ENCODE measurements at regions of chr15 and their contacts with region 1.

Region 1: DNA sequence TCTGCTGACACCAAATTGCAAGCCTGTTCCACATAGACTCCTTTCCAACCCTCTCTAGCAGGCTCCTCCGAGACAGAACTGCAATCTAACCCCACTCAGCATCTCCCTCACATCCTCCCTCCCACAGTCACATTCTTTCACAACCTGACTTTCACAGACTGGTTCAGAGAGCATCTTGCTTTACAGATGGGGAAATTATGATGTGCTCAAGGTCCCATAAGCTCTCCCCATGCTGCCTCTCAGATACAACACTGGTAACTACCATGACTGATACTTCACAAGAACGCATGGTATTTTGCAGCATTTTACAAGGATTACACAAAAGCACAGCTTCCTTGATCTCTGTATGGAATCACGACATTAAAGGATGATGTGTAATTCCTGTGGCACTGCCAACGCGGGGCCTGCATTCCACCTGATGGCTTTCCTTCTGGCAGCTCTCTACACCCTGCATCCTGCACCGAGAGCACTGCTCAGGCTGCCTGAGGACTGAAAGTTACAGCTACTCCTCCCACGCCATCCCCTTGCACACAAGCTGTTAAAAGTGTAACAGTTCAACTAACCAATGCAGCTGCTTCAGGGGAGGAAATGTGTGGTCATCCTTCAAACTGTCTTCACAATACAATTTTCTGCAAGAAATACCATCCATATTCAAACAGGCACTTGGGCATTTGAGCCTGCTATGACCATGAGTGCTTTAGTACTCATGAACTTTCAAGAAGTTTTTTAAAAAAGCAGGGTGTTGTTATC is 27.6 kb downstream of the TBC1D2B start:
- DNase-seq: peak; percentile 73
- H3K4me3 Mint-ChIP-seq: peak overlapping the region; percentile 51
- H3K27ac Mint-ChIP-seq: peak overlapping the region; percentile 87
- H3K4me1 Mint-ChIP-seq: peaks cover 97% of the 10 kb centered on the region
- H3K27me3 Mint-ChIP-seq: no peaks in the 10 kb centered on the region

Region 2: DNA sequence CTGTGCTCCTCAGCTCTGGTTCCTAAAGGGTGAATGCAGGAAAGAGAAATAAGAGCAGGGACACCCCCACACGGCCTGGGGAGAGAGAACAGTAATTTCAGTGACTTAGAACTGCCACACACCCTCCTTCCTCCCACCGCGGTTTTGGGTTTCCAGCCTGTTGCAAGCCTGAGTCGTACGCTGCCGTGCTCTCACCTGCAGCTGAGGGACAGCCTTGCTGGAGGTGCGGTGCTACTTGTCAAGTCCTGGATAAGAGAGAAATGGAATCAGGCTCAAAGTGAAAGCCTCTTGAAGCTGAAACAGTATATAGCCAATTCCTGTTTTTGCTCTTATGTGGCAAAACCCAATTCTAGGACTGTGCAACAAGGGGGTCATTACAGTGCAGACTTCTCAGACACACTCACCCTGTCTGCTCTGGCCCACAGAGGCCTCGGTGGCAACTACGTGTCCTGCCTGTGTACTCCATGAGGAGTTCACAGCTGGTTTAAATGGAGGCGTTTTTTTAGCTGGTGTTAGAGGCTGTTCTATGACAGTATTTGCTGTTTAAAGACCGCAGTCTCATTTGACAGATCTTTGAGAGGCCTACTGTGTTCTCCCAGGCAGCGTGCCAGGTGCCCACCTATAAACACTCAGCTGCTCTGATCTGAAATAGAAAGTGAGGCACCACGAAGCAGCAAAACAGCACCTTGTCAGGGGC is 15.2 kb before region 1 on chr15:
- CTCF ChIA-PET with region 1: interaction called, 14 read pairs
- POLR2A ChIA-PET with region 1: interaction called, 3 read pairs
- DNase-seq: peak; percentile 86
- H3K4me3 Mint-ChIP-seq: peak overlapping the region; percentile 45
- H3K27ac Mint-ChIP-seq: peak overlapping the region; percentile 79
- H3K4me1 Mint-ChIP-seq: peaks cover 87% of the 10 kb centered on the region
- H3K27me3 Mint-ChIP-seq: no peaks in the 10 kb centered on the region

Region 3: DNA sequence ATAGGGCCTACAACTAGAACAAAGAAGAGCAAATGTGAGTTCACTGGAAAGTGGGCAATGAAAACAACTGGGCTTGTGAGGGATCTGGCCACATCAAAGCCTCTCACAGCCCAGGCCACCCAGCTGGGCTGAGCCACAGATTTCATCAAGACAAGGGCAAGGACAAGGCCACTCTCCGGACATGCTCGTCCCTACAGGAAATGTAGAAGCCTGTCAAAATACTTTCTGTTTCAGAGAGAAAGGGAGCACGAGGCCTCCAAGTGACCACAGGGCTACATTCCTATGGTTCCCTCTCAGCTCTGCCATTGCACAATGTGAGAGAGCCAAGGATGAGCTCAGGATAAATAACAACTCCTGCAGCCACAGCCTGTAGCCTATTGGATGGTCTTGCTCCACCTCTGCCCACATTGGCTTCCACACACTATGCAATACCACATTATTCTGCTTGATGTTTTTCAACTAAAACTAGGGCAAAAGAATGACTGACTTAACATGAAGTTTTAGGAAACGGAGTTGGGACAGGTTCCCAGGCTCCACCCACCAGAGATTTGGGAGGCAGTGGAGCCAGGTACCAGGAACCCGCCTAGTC is 15.5 kb after region 1 on chr15:
- CTCF ChIA-PET with region 1: interaction called, 73 read pairs
- POLR2A ChIA-PET with region 1: interaction called, 4 read pairs
- DNase-seq: no peak
- H3K4me3 Mint-ChIP-seq: peak overlapping the region; percentile 45
- H3K27ac Mint-ChIP-seq: no peak overlapping the region
- H3K4me1 Mint-ChIP-seq: peaks cover 11% of the 10 kb centered on the region
- H3K27me3 Mint-ChIP-seq: no peaks in the 10 kb centered on the region